Panc1 (cell line): ENCODE measurements at regions of chr3 and their contacts with region 1.

Region 1: DNA sequence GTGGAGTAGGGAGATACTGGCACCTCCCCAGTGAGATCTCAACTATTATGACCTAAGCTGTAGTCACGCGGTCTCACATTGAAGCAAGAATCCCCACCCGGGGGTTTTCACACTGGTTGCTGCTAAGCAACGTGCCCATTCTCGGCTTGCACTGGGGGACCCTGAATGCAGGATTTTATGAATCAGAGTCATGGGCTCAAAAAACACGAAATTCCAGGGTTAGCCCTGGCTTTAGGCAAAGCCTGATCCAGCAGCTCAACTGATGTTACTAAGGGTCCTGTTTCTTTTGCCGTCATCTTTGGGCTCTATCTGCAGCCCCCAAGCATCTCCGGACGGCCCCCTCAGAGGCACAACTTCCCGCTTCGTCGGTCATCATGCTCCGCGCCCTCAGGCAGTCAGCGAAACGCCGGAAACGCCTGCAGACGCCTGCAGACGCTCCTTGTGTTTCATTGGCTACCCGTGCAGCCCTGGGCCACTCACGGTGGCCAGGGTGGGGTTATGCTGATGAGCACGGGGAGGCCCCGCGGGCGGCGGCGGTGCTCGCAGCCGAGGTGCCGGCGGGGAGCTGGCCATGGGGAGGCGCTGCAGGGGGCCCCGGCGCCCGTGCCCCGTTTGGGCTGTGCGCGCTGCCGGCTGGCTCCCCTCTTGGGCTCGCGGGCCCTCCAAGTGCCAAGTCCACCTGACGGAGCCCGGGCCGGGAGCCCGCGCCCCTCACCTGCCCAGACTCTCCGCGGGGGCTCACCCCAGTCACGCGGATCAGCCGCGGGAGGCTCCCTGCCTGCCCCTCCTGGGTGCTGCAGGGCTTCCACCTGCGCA is 25.8 kb downstream of the EFCC1 start:
- DNase-seq: peak; percentile 52
- ATAC-seq: peak; percentile 98
- H3K4me3 ChIP-seq: peak overlapping the region; percentile 53 to 64
- H3K27ac ChIP-seq: peak overlapping the region; percentile 80
- H3K4me1 ChIP-seq: peaks cover 14% of the 10 kb centered on the region
- H3K27me3 ChIP-seq: no peaks in the 10 kb centered on the region
- CTCF ChIP-seq: peak; percentile 96

Region 2: DNA sequence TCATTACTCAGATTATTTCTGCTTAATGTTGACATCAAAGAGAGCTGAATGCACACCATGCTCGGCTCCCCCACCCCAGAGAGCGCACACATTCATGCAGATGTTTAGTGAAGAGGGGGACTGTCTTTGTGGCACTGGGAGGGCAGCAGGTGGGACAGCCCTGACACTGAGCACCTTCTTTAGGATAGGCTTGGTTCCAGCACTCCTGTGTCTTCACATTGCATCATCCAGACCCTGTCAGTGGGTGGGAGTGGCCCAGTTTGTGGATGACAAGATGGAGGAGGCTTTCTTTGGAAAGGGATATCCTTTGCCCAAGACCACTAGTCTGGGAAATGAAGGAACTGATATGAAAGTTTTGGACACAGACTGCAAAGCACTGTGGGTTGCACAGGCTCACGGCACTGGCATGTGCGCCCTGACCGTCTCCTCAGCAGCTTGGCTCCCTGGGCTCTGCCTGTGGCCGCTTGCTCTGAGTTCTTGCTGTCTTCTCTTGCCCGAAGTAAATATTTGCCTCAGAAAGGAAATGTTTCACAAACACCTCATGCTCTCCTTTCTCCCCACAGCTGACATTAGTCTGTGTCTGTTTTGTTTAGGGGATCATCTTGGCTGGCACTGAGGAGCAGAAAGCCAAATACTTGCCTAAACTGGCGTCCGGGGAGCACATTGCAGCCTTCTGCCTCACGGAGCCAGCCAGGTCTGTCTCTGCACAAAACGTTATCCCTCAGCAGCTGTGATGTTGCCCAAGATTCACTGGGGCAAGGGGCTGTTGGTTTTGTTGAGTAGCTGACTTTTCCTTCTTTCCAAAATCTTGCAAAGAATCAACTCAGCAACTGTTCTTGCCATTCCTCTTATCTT is 130.9 kb before region 1 on chr3:
- CTCF ChIA-PET with region 1: no interaction called
- POLR2A ChIA-PET with region 1: interaction called, 11 read pairs
- in situ Hi-C with region 1: no loop called
- intact Hi-C with region 1: no loop called
- DNase-seq: no peak
- ATAC-seq: no peak
- H3K4me3 ChIP-seq: no peak overlapping the region
- H3K27ac ChIP-seq: no peak overlapping the region
- H3K4me1 ChIP-seq: no peaks in the 10 kb centered on the region
- H3K27me3 ChIP-seq: no peaks in the 10 kb centered on the region
- CTCF ChIP-seq: no peak

Region 3: GRCh38 chr3:129016356-129016719 is 10.6 kb before region 1 on chr3:
- CTCF ChIA-PET with region 1: no interaction called
- POLR2A ChIA-PET with region 1: no interaction called
- in situ Hi-C with region 1: no loop called
- intact Hi-C with region 1: no loop called
- DNase-seq: no peak
- ATAC-seq: peak; percentile 38; the same call in 1 of the 2 replicates
- H3K4me3 ChIP-seq: no peak overlapping the region
- H3K27ac ChIP-seq: no peak overlapping the region; the same call in 1 of the 2 replicates
- H3K4me1 ChIP-seq: no peaks in the 10 kb centered on the region
- H3K27me3 ChIP-seq: no peaks in the 10 kb centered on the region
- CTCF ChIP-seq: no peak

Region 4: GRCh38 chr3:129045675-129046036 is 18.7 kb after region 1 on chr3:
- CTCF ChIA-PET with region 1: interaction called, 10 read pairs
- POLR2A ChIA-PET with region 1: no interaction called
- in situ Hi-C with region 1: no loop called
- intact Hi-C with region 1: no loop called
- DNase-seq: no peak
- ATAC-seq: no peak
- H3K4me3 ChIP-seq: no peak overlapping the region
- H3K27ac ChIP-seq: no peak overlapping the region
- H3K4me1 ChIP-seq: no peaks in the 10 kb centered on the region; the same call in 1 of the 2 replicates
- H3K27me3 ChIP-seq: no peaks in the 10 kb centered on the region
- CTCF ChIP-seq: no peak

Region 5: GRCh38 chr3:129052675-129053074 is 25.7 kb after region 1 on chr3:
- CTCF ChIA-PET with region 1: interaction called, 11 read pairs
- POLR2A ChIA-PET with region 1: no interaction called
- in situ Hi-C with region 1: no loop called
- intact Hi-C with region 1: no loop called
- DNase-seq: no peak
- ATAC-seq: no peak
- H3K4me3 ChIP-seq: no peak overlapping the region
- H3K27ac ChIP-seq: no peak overlapping the region
- H3K4me1 ChIP-seq: peaks cover 33% of the 10 kb centered on the region
- H3K27me3 ChIP-seq: no peaks in the 10 kb centered on the region
- CTCF ChIP-seq: no peak

Region 6: DNA sequence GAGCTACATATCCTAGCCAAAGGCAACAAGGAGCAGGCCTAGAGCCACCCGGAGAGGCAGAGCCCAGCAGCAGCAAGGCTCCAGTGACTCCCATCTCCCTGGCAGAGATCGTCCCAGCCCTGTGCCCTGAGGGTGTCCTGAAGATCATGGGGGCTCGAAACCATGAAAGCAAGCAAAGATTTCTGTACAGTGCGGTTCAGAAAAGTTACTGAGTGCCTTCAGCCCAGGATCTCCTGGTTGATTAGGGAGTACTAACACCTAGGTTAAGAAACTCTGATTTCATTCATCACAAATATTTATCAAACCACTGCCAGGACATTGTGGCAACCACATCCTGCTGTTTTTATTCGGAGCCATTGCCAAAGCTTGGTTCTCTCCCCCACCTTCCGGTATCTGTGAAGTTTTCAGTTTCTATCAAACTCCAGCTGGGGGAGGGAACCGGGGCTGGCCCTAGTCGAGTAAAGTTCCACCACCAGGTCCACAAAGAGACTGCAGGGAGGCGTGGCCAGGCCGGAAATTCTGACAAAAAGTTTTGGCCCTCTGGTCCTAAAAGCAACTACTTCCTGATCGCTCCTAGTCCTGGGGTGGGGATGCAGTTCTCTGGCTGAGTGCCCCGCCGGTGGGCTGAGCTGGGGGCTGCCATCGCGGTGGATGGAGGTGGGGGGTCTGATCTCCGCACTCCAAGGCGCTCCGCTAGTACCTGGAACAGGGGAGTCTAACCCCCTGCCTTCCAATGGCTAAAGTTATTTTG is 93.5 kb after region 1 on chr3:
- CTCF ChIA-PET with region 1: interaction called, 12 read pairs
- POLR2A ChIA-PET with region 1: interaction called, 3 read pairs
- in situ Hi-C with region 1: no loop called
- intact Hi-C with region 1: no loop called
- DNase-seq: peak; percentile 28
- ATAC-seq: peak; percentile 53
- H3K4me3 ChIP-seq: peak overlapping the region; percentile 76 to 81
- H3K27ac ChIP-seq: peak overlapping the region; percentile 91
- H3K4me1 ChIP-seq: peaks cover 39% of the 10 kb centered on the region
- H3K27me3 ChIP-seq: no peaks in the 10 kb centered on the region
- CTCF ChIP-seq: no peak